B cell (primary cell): ENCODE measurements at regions of chr4 and their contacts with region 1.

Region 1: DNA sequence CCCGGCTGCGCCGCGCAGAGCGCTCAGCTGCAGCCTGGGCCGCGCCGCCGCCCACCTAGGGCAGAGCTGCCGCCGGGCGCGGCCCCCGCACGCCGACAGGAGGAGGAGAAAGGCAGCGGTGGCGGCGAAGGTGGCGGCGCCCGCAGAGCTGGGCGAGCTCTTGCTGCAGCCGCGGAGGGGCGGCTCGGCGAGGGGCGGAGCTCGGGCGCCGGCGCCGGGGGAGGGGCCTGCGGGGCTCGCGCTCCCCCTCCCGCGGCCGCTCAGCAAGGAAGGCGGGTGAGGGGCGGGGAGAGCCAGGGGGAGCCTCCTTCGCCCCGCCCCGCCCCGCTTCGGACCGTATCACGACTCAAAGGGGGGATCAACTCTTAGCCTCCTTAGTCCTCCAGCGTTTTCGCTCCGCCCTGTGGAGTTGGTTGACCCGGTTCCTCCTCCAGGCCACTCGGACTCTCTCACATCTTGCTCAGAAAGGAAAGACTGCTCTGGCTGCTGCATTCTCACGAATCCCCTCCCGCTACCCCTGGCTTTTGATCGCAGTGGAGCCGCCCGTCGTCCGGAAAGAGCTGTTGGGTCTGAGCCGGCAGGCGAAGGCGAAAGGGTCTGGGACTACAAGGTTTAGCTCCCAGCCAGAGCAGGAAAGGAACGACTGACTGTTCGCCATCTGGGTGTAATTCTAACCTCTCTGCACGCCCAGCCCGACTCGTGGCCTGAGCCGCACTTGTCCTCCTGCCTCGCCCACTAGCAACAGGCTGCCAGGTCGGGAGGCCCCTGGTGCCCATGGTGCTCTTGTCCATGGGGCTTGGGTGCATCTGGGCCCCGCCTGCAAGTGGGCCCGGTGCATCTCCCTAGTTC is at the start of gene ATP8A1:
- DNase-seq: peak; percentile 96
- ATAC-seq: peak; percentile 92
- H3K4me3 ChIP-seq: peak within 1 kb of the TSS; percentile 85 to 99 (median 94)
- H3K4me3 Mint-ChIP-seq: peak within 1 kb of the TSS; percentile 99
- H3K27ac ChIP-seq: peak within 1 kb of the TSS; percentile 90 to 92
- H3K27ac Mint-ChIP-seq: peak within 1 kb of the TSS; percentile 100
- H3K4me1 ChIP-seq: peaks cover 21 to 26% of the 10 kb centered on the region in 2 donors
- H3K4me1 Mint-ChIP-seq: peaks cover 45% of the 10 kb centered on the region
- H3K27me3 ChIP-seq: no peaks in the 10 kb centered on the region
- H3K27me3 Mint-ChIP-seq: no peaks in the 10 kb centered on the region
- CTCF ChIP-seq: no peak
- total RNA-seq, gene ATP8A1: 51.8 and 54.3 TPM in 2 replicates

Region 2: DNA sequence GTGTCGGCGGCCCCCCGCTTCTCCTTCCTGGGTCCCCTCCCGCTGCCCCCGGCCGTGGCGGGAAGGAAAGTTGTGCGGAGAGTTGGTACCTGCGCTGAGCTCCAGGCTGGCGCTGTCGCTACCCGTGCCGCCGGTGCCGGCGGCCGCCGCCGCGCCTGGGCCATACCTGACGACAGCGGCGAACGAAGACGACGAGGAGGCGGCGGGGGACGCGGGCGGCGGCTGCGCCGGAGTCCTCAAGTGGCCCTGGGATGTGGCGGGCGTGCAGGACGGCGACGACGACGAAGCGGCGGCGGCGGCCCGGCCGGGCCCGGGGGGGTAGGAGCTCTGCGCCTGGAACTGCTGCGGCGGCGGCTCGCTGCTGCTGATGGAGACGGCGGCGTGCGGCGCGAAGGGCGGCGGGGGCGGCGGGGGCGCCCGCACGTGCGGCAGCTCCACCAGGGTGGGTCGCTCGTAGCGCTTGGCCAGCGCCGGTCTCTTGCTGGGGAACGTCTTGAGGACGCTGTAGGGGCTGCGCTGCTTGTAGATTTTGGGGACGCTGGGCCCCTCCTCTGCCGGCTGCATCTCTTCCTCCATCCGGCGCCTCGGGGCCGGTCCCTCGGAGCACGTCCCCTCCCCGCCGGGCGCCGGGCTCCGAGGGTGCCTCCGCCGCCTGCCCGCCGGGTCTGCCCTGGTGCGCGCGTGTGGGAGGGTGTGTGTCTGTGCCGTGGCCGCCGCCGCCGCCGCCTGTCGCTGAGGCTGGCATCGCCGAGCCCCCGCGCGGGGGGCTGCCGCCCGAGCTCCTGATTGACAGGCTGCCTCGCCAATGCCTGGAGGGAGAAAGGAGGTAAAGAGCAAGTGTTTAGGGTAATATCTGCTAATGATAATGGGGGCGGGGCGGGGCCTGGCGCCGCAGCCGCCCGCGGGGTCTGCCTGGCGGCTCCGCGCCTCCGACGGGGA is 505.3 kb before region 1 on chr4:
- CTCF ChIA-PET with region 1: no interaction called
- POLR2A ChIA-PET with region 1: no interaction called
- intact Hi-C with region 1: loop called (anchors 5 kb)
- DNase-seq: peak; percentile 88
- ATAC-seq: peak; percentile 71
- H3K4me3 ChIP-seq: peak overlapping the region in 4 of 5 experiments; percentile 68 to 82 (median 78)
- H3K4me3 Mint-ChIP-seq: peak overlapping the region; percentile 92
- H3K27ac ChIP-seq: peak overlapping the region in 1 of 2 donors; percentile 75
- H3K27ac Mint-ChIP-seq: peak overlapping the region; percentile 89
- H3K4me1 ChIP-seq: peaks cover 15 to 22% of the 10 kb centered on the region in 2 donors
- H3K4me1 Mint-ChIP-seq: peaks cover 35% of the 10 kb centered on the region
- H3K27me3 ChIP-seq: peaks cover 0 to 10% (median 0%) of the 10 kb centered on the region in 4 experiments
- H3K27me3 Mint-ChIP-seq: no peaks in the 10 kb centered on the region
- CTCF ChIP-seq: no peak

Region 3: GRCh38 chr4:42600578-42600977 is 56.6 kb before region 1 on chr4:
- CTCF ChIA-PET with region 1: interaction called, 6 read pairs
- POLR2A ChIA-PET with region 1: interaction called, 3 read pairs
- intact Hi-C with region 1: loop called (anchors 2 kb)
- DNase-seq: peak; percentile 30
- ATAC-seq: peak; percentile 36
- H3K4me3 ChIP-seq: no peak overlapping the region
- H3K4me3 Mint-ChIP-seq: no peak overlapping the region
- H3K27ac ChIP-seq: peak overlapping the region in 1 of 2 donors; percentile 3
- H3K27ac Mint-ChIP-seq: peak overlapping the region; percentile 61
- H3K4me1 ChIP-seq: peaks cover 5 to 10% of the 10 kb centered on the region in 2 donors
- H3K4me1 Mint-ChIP-seq: peaks cover 12% of the 10 kb centered on the region
- H3K27me3 ChIP-seq: no peaks in the 10 kb centered on the region
- H3K27me3 Mint-ChIP-seq: no peaks in the 10 kb centered on the region
- CTCF ChIP-seq: no peak

Region 4: DNA sequence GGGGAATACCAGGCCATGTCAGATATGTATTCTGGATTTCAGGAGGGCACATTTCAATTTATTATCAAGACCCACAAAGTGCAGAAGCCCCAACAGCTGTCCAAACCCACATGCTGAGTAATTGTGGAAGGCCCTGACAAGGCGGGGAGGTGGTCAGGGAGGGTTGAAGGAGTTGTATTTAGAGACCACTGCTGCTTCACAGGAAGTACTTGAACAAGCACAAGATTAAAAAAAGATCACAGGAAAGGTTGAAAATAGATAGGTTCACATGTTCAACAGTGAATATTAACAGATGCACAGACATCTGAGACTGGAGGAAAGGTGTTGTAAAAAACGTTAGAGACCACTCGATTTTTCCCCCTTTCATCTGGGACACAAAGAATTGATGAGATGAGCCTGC is 18.2 kb before region 1 on chr4:
- CTCF ChIA-PET with region 1: interaction called, 28 read pairs
- POLR2A ChIA-PET with region 1: interaction called, 26 read pairs
- intact Hi-C with region 1: loop called (anchors 1 kb)
- DNase-seq: no peak
- ATAC-seq: no peak
- H3K4me3 ChIP-seq: peak overlapping the region in 4 of 5 experiments; percentile 11 to 48 (median 18)
- H3K4me3 Mint-ChIP-seq: peak overlapping the region; percentile 67
- H3K27ac ChIP-seq: peak overlapping the region; percentile 56 to 85
- H3K27ac Mint-ChIP-seq: peak overlapping the region; percentile 84
- H3K4me1 ChIP-seq: peaks cover 85 to 90% of the 10 kb centered on the region in 2 donors
- H3K4me1 Mint-ChIP-seq: peaks cover 93% of the 10 kb centered on the region
- H3K27me3 ChIP-seq: no peaks in the 10 kb centered on the region
- H3K27me3 Mint-ChIP-seq: no peaks in the 10 kb centered on the region
- CTCF ChIP-seq: no peak